ENCODE measurements at regions of chr5 and their contacts with region 1.

Region 1: DNA sequence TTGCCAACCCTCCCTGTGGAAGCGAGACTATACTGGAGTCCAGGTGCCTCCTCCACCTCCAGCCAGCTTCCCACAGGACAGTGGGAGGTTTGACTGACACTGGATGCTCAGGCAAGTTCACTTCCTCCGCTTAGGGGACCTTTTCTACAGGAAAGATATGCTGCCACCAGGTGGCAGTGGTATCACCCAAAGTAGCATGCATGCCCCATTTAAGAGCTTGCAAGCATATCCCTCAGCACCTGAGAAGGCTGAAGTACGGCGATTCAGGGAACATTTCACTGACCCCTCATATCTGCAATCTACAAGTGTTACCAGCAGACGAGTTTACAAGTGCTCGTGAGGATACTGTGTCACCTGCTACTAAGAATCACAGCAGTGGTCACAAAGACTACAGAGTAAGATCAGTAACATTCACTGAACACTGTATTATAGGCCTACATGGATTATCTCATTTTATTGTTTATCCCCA is 75.5 kb downstream of the KLHL3 start:
- DNase-seq: peak; percentile 77 to 90 (median 85)
- H3K4me3 ChIP-seq: no peak overlapping the region
- H3K27ac ChIP-seq: no peak overlapping the region
- H3K4me1 ChIP-seq: peaks cover 0 to 3% (median 0%) of the 10 kb centered on the region in 4 experiments
- H3K27me3 ChIP-seq: no peaks in the 10 kb centered on the region

Region 2: GRCh38 chr5:137545956-137546355 is 114.4 kb before region 1 on chr5:
- CTCF ChIA-PET with region 1: no interaction called
- POLR2A ChIA-PET with region 1: no interaction called
- DNase-seq: no peak
- H3K4me3 ChIP-seq: no peak overlapping the region
- H3K27ac ChIP-seq: no peak overlapping the region
- H3K4me1 ChIP-seq: no peaks in the 10 kb centered on the region
- H3K27me3 ChIP-seq: no peaks in the 10 kb centered on the region

Region 3: GRCh38 chr5:137629646-137630045 is 30.7 kb before region 1 on chr5:
- CTCF ChIA-PET with region 1: interaction called, 41 read pairs
- POLR2A ChIA-PET with region 1: no interaction called
- DNase-seq: peak; percentile 52 to 78 (median 72)
- H3K4me3 ChIP-seq: peak overlapping the region in 1 of 7 experiments; percentile 67
- H3K27ac ChIP-seq: no peak overlapping the region
- H3K4me1 ChIP-seq: peaks cover 0 to 10% (median 5%) of the 10 kb centered on the region in 4 experiments
- H3K27me3 ChIP-seq: no peaks in the 10 kb centered on the region

Region 4: DNA sequence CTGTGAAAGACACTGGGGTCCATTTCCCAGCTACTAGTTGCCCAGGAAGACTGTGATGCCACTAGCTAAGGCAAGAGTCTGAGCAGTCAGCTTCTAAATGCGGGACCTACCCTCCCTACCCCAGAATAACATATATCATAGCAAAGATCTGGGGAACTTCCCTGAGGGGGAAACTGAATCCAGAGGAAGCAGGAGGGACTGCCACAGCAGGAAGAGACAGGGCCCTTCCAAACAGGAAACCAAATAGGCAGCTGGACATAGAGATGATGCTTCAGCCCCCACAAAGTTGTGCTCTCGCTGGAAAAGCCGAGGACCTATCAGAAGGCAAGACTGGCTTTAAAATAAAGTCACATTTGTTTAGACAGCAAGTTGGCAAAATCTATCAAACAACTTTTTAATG is 24.4 kb after region 1 on chr5:
- CTCF ChIA-PET with region 1: interaction called, 12 read pairs
- POLR2A ChIA-PET with region 1: no interaction called
- DNase-seq: peak in 2 of 3 donors; percentile 43 to 55
- H3K4me3 ChIP-seq: peak overlapping the region in 1 of 7 experiments; percentile 13
- H3K27ac ChIP-seq: no peak overlapping the region
- H3K4me1 ChIP-seq: peaks cover 0 to 8% (median 8%) of the 10 kb centered on the region in 4 experiments
- H3K27me3 ChIP-seq: no peaks in the 10 kb centered on the region

Region 5: DNA sequence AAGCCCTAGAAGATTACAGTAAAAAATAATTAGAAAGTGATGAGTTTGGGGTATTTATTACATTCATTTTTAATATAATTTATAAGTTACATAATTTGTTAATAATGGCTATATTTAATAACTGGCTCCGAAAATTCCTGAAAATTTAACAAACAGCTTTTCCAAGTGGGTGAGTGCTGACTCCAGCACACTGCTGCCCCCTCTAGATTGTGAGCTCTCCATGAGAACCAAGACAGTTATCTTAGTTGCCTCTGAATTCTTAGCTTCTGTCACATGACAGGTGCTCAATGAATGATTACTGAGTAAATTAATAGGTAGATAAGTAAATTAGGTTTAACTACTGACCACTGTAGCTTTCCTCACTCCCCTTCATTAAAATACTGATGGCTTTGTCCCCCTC is 67.7 kb after region 1 on chr5:
- CTCF ChIA-PET with region 1: interaction called, 66 read pairs
- POLR2A ChIA-PET with region 1: no interaction called
- DNase-seq: no peak
- H3K4me3 ChIP-seq: no peak overlapping the region
- H3K27ac ChIP-seq: no peak overlapping the region
- H3K4me1 ChIP-seq: peaks cover 3 to 27% (median 9%) of the 10 kb centered on the region in 4 experiments
- H3K27me3 ChIP-seq: no peaks in the 10 kb centered on the region

Region 6: GRCh38 chr5:137743031-137743640 is 82.8 kb after region 1 on chr5:
- CTCF ChIA-PET with region 1: interaction called, 338 read pairs
- POLR2A ChIA-PET with region 1: no interaction called
- DNase-seq: peak; percentile 83 to 90 (median 85)
- H3K4me3 ChIP-seq: no peak overlapping the region
- H3K27ac ChIP-seq: no peak overlapping the region
- H3K4me1 ChIP-seq: peaks cover 0 to 3% (median 0%) of the 10 kb centered on the region in 4 experiments
- H3K27me3 ChIP-seq: no peaks in the 10 kb centered on the region

Measured in common myeloid progenitor, CD34-positive (primary cell).